GM12878 (cell line): ENCODE measurements at regions of chr1 and their contacts with region 1.

Region 1: DNA sequence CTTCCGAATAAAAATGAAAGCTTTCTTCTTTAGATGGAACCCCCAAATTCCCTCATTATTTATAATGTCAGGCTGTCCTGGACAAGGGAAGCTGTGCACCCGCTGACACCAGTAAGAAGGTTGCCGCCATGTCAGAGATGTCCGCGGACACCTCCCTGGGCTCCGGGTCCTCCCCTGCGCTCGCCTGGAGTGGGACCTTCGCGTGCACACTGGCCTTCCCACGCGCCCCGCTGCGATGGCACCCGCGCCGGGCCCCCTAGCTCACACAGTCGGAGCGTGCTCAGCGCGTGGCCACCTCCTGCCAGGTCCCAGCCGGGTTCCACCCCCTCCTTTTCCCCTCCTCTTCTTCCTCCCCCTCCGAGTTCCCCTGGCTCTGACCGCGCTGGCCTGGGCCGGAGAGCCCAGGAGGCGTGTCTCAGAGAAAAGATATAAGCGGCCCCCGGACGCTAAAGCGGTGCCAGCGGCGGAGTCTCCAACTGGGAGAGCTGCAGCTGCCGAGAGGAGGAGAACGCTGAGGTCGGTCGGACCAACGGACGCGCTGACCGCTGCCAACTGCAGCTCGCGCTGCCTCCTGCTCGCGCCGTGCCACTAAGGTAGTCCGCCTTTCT is at the start of gene G0S2:
- DNase-seq: no peak
- ATAC-seq: peak; percentile 55
- H3K4me3 ChIP-seq: no peak within 1 kb of the TSS
- H3K27ac ChIP-seq: no peak within 1 kb of the TSS
- H3K4me1 ChIP-seq: peaks cover 18% of the 10 kb centered on the region
- H3K27me3 ChIP-seq: peaks cover 0 to 3% of the 10 kb centered on the region in 2 experiments; a peak in 3 of 4 replicates
- CTCF ChIP-seq: no peak
- EP300 ChIP-seq: no peak
- POLR2A ChIP-seq: no peak
- RAD21 ChIP-seq: no peak
- polyA plus RNA-seq, gene G0S2: 0.07 to 0.08 TPM

Region 2: DNA sequence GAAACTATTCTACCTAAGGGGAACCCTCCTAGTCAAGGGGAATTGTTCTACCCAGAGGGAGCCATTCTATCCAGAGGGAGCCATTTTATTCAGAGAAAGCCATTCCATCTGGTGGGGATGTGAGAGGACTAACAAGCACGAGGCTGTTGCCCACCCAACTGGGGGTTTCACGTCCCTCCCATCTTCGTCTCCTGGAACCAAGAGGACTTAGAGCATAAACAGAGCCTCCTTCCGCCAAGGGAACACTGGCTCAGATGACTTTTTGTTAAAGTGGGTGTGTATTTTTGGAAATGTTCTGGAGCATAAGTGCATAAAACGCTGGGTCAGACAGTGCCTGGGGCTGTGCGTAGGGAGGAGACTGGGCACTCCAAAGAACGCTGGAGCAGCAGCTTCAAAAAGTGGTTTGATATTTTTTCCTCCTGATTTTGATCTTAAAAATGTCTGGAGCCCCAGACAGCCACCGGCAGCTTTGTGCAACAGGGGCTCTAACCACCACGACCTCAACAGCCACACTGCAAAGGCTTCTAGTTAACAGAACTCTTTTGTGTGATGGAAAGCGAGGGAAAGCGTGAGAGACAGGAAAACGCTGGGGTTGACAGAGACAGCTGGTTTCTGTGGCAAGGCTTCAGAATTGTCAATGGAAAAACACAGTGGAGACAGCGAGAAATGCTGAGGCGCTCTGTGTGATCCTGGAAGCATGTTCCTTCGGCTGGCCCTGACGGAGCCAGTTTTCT is 455.1 kb before region 1 on chr1:
- CTCF ChIA-PET with region 1: no interaction called
- POLR2A ChIA-PET with region 1: no interaction called
- RAD21 ChIA-PET with region 1: no interaction called
- SMC1A ChIA-PET with region 1: no interaction called
- in situ Hi-C with region 1: no loop called
- intact Hi-C with region 1: no loop called
- DNase-seq: no peak
- ATAC-seq: no peak
- H3K4me3 ChIP-seq: no peak overlapping the region
- H3K27ac ChIP-seq: no peak overlapping the region
- H3K4me1 ChIP-seq: no peaks in the 10 kb centered on the region
- H3K27me3 ChIP-seq: no peaks in the 10 kb centered on the region
- CTCF ChIP-seq: no peak
- EP300 ChIP-seq: no peak
- POLR2A ChIP-seq: no peak
- RAD21 ChIP-seq: no peak

Region 3: GRCh38 chr1:209607102-209607794 is 67.8 kb before region 1 on chr1:
- CTCF ChIA-PET with region 1: interaction called, 4 read pairs
- POLR2A ChIA-PET with region 1: interaction called, 16 read pairs
- RAD21 ChIA-PET with region 1: interaction called, 6 read pairs
- SMC1A ChIA-PET with region 1: interaction called, 5 read pairs
- in situ Hi-C with region 1: no loop called
- intact Hi-C with region 1: no loop called
- DNase-seq: peak; percentile 48
- ATAC-seq: peak; percentile 93
- H3K4me3 ChIP-seq: no peak overlapping the region
- H3K27ac ChIP-seq: peak overlapping the region; percentile 45; the same call in 1 of the 2 replicates
- H3K4me1 ChIP-seq: peaks cover 10% of the 10 kb centered on the region
- H3K27me3 ChIP-seq: no peaks in the 10 kb centered on the region
- CTCF ChIP-seq: no peak
- EP300 ChIP-seq: no peak
- POLR2A ChIP-seq: no peak
- RAD21 ChIP-seq: no peak

Region 4: DNA sequence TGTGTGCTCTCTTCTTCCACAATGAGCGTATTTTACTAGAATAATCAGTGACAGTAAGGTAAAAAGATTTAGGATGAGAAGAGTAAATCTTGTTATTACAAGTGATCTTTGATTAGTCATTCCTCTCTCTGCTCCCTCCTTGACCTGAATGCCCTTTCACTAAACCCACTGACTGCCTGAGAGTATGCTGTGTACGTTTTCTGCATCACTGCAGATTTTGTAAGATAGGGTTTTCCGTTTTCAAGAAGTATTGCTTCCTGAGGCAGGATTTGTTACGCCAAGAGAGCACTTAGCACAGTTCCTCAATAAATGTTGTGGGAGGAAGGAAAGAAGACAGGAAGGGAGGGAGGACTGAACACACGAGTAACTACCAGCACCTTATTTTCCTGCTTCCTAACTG is 15.2 kb before region 1 on chr1:
- CTCF ChIA-PET with region 1: interaction called, 58 read pairs
- POLR2A ChIA-PET with region 1: interaction called, 95 read pairs
- RAD21 ChIA-PET with region 1: interaction called, 195 read pairs
- SMC1A ChIA-PET with region 1: interaction called, 261 read pairs
- in situ Hi-C with region 1: no loop called
- intact Hi-C with region 1: loop called (anchors 2 kb)
- DNase-seq: no peak
- ATAC-seq: peak; percentile 82
- H3K4me3 ChIP-seq: no peak overlapping the region
- H3K27ac ChIP-seq: no peak overlapping the region
- H3K4me1 ChIP-seq: peaks cover 3% of the 10 kb centered on the region; the same call in 1 of the 2 replicates
- H3K27me3 ChIP-seq: no peaks in the 10 kb centered on the region; a peak in 1 of 4 replicates
- CTCF ChIP-seq: no peak
- EP300 ChIP-seq: 0 out of 4 replicates have a peak, but pooled peaks of 1 of the 2 experiments have one; percentile 43
- POLR2A ChIP-seq: no peak
- RAD21 ChIP-seq: no peak

Region 5: GRCh38 chr1:209692745-209693504 is 17.9 kb after region 1 on chr1:
- CTCF ChIA-PET with region 1: interaction called, 33 read pairs
- POLR2A ChIA-PET with region 1: interaction called, 6 read pairs
- RAD21 ChIA-PET with region 1: interaction called, 38 read pairs
- SMC1A ChIA-PET with region 1: interaction called, 117 read pairs
- in situ Hi-C with region 1: no loop called
- intact Hi-C with region 1: no loop called
- DNase-seq: peak; percentile 34
- ATAC-seq: peak; percentile 89
- H3K4me3 ChIP-seq: no peak overlapping the region
- H3K27ac ChIP-seq: no peak overlapping the region
- H3K4me1 ChIP-seq: no peaks in the 10 kb centered on the region
- H3K27me3 ChIP-seq: no peaks in the 10 kb centered on the region
- CTCF ChIP-seq: peak; percentile 80 to 92 (median 83)
- EP300 ChIP-seq: 0 out of 4 replicates have a peak, but pooled peaks of 1 of the 2 experiments have one; percentile 31
- POLR2A ChIP-seq: no peak
- RAD21 ChIP-seq: peak; percentile 97

Region 6: GRCh38 chr1:209769171-209769904 is 94.3 kb after region 1 on chr1:
- CTCF ChIA-PET with region 1: interaction called, 6 read pairs
- POLR2A ChIA-PET with region 1: interaction called, 5 read pairs
- RAD21 ChIA-PET with region 1: interaction called, 4 read pairs
- SMC1A ChIA-PET with region 1: interaction called, 11 read pairs
- in situ Hi-C with region 1: no loop called
- intact Hi-C with region 1: no loop called
- DNase-seq: peak; percentile 75
- ATAC-seq: peak; percentile 84
- H3K4me3 ChIP-seq: peak overlapping the region; percentile 72
- H3K27ac ChIP-seq: peak overlapping the region; percentile 93
- H3K4me1 ChIP-seq: peaks cover 52% of the 10 kb centered on the region
- H3K27me3 ChIP-seq: no peaks in the 10 kb centered on the region
- CTCF ChIP-seq: no peak
- EP300 ChIP-seq: peak; percentile 73 to 79; a peak in 3 of 4 replicates
- POLR2A ChIP-seq: no peak
- RAD21 ChIP-seq: no peak